ENCODE measurements at regions of chr2 and their contacts with region 1.

Region 1: DNA sequence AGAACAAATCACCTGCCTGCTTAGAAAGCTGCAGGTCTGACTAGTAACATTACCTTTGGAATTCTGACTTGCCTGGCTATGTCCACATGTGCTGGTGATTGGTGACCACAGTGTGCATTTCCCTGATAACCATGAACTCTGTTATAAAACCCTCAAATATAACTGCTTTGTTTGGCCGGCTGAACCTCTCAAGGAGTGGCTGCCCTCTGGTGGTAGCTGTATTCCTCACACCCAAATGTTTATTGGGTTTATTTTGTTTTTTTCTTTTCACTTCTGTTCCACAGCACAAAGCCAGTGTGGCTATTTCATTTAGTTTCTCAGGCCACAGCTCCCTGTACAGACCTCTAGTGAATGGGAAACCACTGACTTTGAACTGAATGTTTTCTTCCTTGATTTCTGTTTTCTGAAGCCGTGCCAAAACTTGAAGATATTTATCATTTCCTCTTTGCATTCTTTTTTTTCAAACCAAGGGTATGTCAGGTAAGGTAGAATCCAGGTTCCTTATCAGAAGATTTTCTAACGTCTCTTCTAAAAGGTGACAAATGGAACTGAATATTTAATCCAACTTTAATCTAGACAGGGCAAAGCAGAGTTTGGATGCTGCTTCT is 549.0 kb upstream of the VRK2 start:
- DNase-seq: peak in 7 of 10 donors; percentile 12 to 50 (median 43)
- H3K4me3 ChIP-seq: no peak overlapping the region
- H3K27ac ChIP-seq: no peak overlapping the region
- H3K27me3 ChIP-seq: no peaks in the 10 kb centered on the region
- CTCF ChIP-seq: peak; percentile 65 to 90 (median 80)

Region 2: GRCh38 chr2:56191683-56192082 is 1305.9 kb before region 1 on chr2:
- intact Hi-C with region 1: loop called in 1 of 2 experiments (anchors 5 kb)
- DNase-seq: peak in 3 of 10 donors; percentile 46 to 53 (median 53)
- H3K4me3 ChIP-seq: no peak overlapping the region
- H3K27ac ChIP-seq: no peak overlapping the region
- H3K27me3 ChIP-seq: no peaks in the 10 kb centered on the region
- CTCF ChIP-seq: peak in 55 of 56 donors; percentile 18 to 67 (median 47)